Posterior vena cava (tissue), 2 donors: ENCODE measurements at regions of chr11 and their contacts with region 1.

Region 1: DNA sequence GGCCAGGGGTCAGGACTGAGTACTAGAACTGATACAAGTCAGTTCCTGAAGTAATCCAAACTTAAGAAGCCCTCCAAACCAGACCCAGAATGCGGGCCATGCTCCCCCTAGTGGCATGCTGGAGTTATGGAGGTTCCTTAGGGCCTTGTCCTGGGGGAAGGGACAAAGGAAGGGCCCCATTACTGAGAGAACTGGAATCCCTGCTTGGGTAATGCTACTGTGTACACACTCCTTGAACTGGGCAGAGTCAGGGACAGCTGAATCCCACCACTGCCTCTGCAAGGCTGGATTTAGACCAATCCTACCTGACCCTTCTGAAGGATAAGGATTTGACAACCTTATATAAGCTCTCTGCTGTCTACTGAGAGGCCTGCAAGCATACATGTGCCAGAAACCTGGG is 97.3 kb upstream of the AKIP1 start:
- DNase-seq: peak; percentile 91

Region 2: DNA sequence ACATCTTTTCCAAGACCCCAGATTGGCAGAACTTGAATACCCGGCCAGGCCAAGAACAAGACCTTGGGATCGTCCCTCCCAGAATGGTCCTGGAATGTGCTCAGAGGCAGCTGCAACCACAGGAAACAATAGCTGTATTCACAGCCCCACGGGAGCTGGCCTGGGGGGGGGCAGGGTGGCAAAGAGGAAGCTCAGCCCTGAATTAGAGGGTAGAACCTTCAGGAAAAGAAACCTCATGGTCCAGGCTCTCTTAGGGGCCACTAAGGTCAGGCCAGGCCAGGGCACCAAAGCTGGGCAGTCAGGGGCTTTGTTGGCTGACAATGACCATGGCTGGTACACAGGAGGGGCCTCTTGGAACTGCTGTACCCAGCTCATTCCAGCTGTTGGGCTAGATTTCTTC is 113.8 kb before region 1 on chr11:
- intact Hi-C with region 1: loop called in 1 of 2 experiments (anchors 5 kb)
- DNase-seq: peak; percentile 82

Region 3: DNA sequence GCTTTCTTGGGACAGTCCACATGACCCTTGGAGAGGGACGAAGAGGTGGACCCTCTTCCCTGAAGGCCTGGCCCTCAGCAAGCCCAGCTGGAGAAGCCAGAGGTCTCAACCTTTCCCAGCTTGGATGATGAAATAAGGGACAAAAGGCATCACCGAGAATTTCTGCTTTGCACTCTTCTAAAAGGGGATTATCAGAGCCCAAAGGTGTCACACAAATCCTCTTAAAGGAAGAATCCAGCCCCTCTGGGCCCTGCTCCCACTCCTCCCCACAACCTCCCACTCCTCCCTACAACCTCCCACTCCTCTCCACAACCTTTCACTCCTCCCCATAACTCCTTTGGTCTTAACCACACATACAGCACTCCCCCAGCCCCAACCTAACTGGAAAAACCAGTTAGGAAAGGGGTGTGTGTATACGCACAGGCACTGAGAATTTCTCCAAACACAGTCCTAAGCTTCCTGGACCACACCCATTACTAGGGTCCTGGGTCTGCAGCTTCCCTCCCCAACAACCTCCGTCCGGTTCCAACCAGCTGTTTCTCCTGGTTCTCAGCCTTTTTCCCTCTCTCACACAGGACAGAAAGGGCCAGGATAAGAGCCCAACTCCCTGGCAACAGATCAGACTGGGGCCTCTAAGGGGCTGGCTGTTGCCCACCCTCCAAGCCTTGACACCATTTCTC is 92.5 kb before region 1 on chr11:
- intact Hi-C with region 1: loop called in 1 of 2 experiments (anchors 5 kb)
- DNase-seq: no peak

Region 4: GRCh38 chr11:8794677-8795103 is 19.0 kb before region 1 on chr11:
- intact Hi-C with region 1: no loop called
- DNase-seq: no peak

Region 5: DNA sequence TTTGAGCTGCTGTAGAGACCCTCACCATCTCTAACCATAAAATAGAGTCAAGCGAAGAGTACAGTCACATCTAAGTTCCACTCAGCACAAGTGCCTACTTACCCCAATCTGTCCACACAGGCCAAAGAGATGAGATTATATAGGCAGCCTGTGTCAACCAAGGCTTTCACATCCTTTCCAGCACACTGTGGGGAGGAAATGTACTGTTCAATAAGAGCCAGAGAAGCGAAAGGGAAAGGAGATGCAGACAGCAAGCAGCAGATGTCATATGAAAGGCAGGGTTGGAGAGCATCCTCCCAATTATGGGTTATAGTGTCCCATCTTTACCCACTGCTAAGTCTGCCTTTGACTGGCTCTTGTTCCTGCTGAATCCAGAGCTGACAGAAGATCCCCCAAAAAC is 173.8 kb after region 1 on chr11:
- intact Hi-C with region 1: no loop called
- DNase-seq: no peak